ENCODE measurements at regions of chr2 and their contacts with region 1.

Region 1: GRCh38 chr2:60002158-60002867 is 551.1 kb downstream of the BCL11A start:
- DNase-seq: no peak
- ATAC-seq: no peak
- H3K4me3 ChIP-seq: no peak overlapping the region
- H3K27ac ChIP-seq: no peak overlapping the region
- H3K4me1 ChIP-seq: no peaks in the 10 kb centered on the region
- H3K27me3 ChIP-seq: no peaks in the 10 kb centered on the region
- CTCF ChIP-seq: no peak

Region 2: GRCh38 chr2:58398406-58398805 is 1603.9 kb before region 1 on chr2:
- intact Hi-C with region 1: no loop called
- DNase-seq: no peak
- ATAC-seq: no peak
- H3K4me3 ChIP-seq: no peak overlapping the region
- H3K27ac ChIP-seq: no peak overlapping the region
- H3K4me1 ChIP-seq: no peaks in the 10 kb centered on the region
- H3K27me3 ChIP-seq: peaks cover 0 to 4% (median 0%) of the 10 kb centered on the region in 7 donors
- CTCF ChIP-seq: no peak

Region 3: GRCh38 chr2:59947917-59948541 is 54.3 kb before region 1 on chr2:
- intact Hi-C with region 1: loop called in 1 of 10 experiments (anchors 2 kb)
- DNase-seq: no peak
- ATAC-seq: no peak
- H3K4me3 ChIP-seq: no peak overlapping the region
- H3K27ac ChIP-seq: no peak overlapping the region
- H3K4me1 ChIP-seq: no peaks in the 10 kb centered on the region
- H3K27me3 ChIP-seq: peaks cover 0 to 7% (median 0%) of the 10 kb centered on the region in 7 donors
- CTCF ChIP-seq: no peak